A549 (cell line): ENCODE measurements at regions of chr12 and their contacts with region 1.

Region 1: GRCh38 chr12:112900299-112901145 is 6.2 kb upstream of the OAS1 start:
- DNase-seq: peak; percentile 61 to 79
- ATAC-seq: peak; percentile 35 to 63; a peak in 3 of 6 replicates
- H3K4me3 ChIP-seq: no peak overlapping the region
- H3K27ac ChIP-seq: peak overlapping the region in 1 of 2 experiments; percentile 13; a peak in 2 of 6 replicates
- H3K4me1 ChIP-seq: peaks cover 43% of the 10 kb centered on the region
- CTCF ChIP-seq: peak; percentile 67
- EP300 ChIP-seq: no peak
- POLR2A ChIP-seq: no peak
- RAD21 ChIP-seq: peak; percentile 57 to 75

Region 2: DNA sequence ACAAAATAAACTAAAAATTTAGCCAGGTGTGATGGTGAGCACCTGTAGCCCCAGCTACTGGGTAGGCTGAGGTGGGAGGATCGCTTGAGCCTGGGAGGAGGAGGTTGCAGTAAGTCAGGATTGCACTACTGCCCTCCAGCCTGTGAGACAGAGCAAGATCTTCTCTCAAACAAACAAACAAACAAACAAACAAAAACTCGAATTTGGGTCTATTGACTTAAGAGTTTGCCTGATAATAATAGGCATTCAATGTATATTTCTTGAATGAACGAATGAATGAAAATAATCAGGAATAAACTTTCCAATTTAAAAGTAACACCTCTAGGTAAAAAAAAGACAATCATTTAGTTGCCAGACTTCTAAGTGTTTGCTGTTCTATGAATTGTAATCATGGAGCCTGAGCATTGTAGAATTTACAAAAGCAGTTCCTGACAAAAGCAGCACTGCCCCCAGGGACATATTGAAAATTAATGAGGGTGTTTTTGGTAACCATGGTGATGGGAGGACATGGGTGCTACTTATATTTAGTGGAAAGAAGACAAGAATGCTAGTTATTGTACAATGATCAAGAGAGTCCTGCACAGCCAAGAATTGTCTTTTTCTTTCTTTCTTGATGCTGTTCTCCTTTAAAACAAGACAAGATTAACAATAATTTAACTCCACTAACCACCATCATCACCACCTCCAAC is 11.8 kb after region 1 on chr12:
- CTCF ChIA-PET with region 1: interaction called, 12 read pairs
- POLR2A ChIA-PET with region 1: no interaction called
- DNase-seq: no peak
- ATAC-seq: no peak
- H3K4me3 ChIP-seq: no peak overlapping the region
- H3K27ac ChIP-seq: no peak overlapping the region
- H3K4me1 ChIP-seq: peaks cover 7% of the 10 kb centered on the region; the same call in 2 of the 3 replicates
- CTCF ChIP-seq: no peak
- EP300 ChIP-seq: no peak
- POLR2A ChIP-seq: no peak
- RAD21 ChIP-seq: no peak